Dorsolateral prefrontal cortex (tissue), 120 donors: ENCODE measurements at regions of chr22 and their contacts with region 1.

Region 1: DNA sequence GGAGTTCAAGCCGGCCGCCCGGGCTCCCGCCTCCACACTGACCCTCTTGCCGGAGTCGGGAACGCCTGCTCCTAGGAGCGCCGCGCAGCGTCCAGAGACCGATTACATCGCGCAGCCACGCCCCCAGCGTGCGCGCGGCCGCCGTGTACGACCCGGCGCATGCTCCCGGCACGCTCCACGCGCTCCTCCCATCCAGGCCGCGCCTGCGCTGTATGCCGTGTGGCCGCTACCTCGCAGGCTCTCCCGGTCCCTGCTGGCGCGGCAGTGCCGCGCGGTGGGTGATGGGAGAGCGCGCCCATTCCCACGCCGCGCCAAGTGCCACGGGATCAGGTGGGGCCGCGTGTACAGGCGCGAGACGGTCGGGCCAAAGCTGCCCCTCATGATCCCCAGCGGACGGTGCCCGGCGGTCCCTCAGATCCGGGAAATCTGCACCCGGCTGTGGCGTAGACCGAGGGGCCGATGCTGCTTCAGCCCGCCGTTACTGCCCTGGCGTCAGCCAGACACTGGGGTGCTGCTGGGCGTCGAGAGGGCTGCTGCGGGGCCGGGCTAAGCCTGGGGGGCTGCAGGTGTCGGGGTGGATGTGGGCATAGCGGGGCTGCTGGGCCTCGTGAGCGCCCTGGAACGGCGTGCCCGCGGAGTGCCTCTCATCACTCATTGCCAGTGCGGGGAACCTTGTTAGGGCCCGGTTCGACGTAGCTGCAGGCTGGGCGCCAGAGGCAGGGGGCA is at the starts of genes GNB1L and RTL10:
- DNase-seq: peak; percentile 86 to 97 (median 94)
- H3K4me3 ChIP-seq: peak within 1 kb of the TSS; percentile 70 to 100 (median 96)
- H3K27ac ChIP-seq: peak within 1 kb of the TSS; percentile 59 to 98 (median 94)
- H3K27me3 ChIP-seq: no peaks in the 10 kb centered on the region
- CTCF ChIP-seq: peak in 52 of 56 donors; percentile 9 to 71 (median 48)
- total RNA-seq, gene GNB1L: 4.8 to 17.5 (median 8.3) TPM
- total RNA-seq, gene RTL10: 15.9 to 53.5 (median 30.1) TPM

Region 2: DNA sequence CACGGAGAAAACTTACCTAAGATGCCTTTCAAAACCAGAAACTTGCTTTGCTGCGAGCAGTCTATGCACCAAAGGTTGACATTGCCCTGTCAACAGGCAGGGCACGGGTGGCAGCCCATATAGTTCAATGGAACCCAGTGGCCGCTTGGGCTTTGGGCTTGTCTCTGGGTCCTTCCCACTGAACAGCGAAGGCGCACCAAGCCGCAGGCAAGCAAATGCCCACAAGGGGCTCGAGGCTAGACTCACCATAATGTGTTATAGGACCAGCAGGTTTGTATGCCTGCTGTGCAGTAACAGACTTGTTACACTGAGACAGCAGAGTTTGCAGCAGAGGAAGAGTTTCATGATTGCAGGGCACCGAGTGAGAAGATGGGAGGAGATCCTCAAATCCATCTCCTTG is 351.1 kb before region 1 on chr22:
- intact Hi-C with region 1: no loop called
- DNase-seq: no peak
- H3K4me3 ChIP-seq: no peak overlapping the region
- H3K27ac ChIP-seq: no peak overlapping the region
- H3K27me3 ChIP-seq: no peaks in the 10 kb centered on the region
- CTCF ChIP-seq: no peak

Region 3: GRCh38 chr22:19730655-19731360 is 124.1 kb before region 1 on chr22:
- intact Hi-C with region 1: loop called in 1 of 2 experiments (anchors 5 kb)
- DNase-seq: peak; percentile 66 to 90 (median 77)
- H3K4me3 ChIP-seq: peak overlapping the region; percentile 14 to 64 (median 49)
- H3K27ac ChIP-seq: peak overlapping the region in 2 of 59 donors; percentile 4 to 52
- H3K27me3 ChIP-seq: no peaks in the 10 kb centered on the region
- CTCF ChIP-seq: peak; percentile 85 to 99 (median 96)

Region 4: GRCh38 chr22:19941365-19942082 is 86.6 kb after region 1 on chr22 and contains the starts of genes COMT and TXNRD2:
- intact Hi-C with region 1: loop called in 1 of 2 experiments (anchors 5 kb)
- DNase-seq: peak in 6 of 10 donors; percentile 49 to 76 (median 63)
- H3K4me3 ChIP-seq: peak within 1 kb of the TSS; percentile 69 to 98 (median 88)
- H3K27ac ChIP-seq: peak within 1 kb of the TSS; percentile 32 to 95 (median 86)
- H3K27me3 ChIP-seq: no peaks in the 10 kb centered on the region
- CTCF ChIP-seq: peak in 23 of 56 donors; percentile 7 to 47 (median 20)
- total RNA-seq, gene COMT: 72.4 to 193 (median 113) TPM
- total RNA-seq, gene TXNRD2: 24.8 to 48.9 (median 32.2) TPM

Region 5: GRCh38 chr22:20020533-20021195 is 165.7 kb after region 1 on chr22 and contains the start of gene TANGO2:
- intact Hi-C with region 1: loop called in 1 of 2 experiments (anchors 10 kb)
- DNase-seq: peak; percentile 84 to 98 (median 90)
- H3K4me3 ChIP-seq: peak within 1 kb of the TSS; percentile 53 to 100 (median 96)
- H3K27ac ChIP-seq: peak within 1 kb of the TSS; percentile 49 to 95 (median 90)
- H3K27me3 ChIP-seq: no peaks in the 10 kb centered on the region
- CTCF ChIP-seq: peak in 14 of 56 donors; percentile 5 to 47 (median 18)
- total RNA-seq, gene TANGO2: 45.5 to 81.1 (median 59.7) TPM

Region 6: DNA sequence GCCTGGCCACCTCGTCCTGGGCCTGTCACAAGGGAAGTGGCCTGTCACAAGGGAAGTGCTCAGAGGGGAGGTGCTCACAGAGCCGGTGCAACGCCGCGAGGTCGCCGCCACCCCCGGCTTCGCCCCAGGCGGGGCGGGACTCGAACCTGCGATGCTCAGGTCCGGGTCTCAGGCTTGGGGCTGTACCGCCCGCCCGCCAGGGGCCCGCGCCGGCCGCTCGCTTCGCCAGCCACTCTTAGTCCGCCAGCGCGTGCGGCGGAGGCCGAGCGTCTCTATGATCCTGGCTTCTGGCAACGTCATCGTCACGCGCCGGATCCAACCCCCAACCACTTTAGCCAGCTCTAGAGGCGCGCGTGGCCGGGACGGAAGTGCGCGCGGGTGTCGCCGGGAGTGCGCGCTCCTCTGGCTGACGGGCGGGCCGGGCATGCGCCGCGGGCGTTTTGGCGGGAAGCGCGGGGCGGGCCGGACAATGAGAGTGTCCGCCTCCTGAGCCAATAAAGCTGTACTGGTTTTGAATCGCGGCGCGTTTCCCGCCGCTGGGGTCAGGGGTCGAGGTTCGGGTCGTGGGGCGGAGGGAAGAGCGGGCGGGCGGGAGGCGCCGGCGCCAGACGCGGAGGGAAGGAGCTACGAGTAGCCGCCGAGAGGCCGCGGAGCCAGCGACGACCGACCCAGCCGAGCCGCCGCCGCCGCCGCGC is 262.2 kb after region 1 on chr22 and contains the start of gene TRMT2A:
- intact Hi-C with region 1: loop called in 1 of 2 experiments (anchors 5 kb)
- DNase-seq: peak; percentile 95 to 99 (median 96)
- H3K4me3 ChIP-seq: peak within 1 kb of the TSS; percentile 50 to 98 (median 87)
- H3K27ac ChIP-seq: peak within 1 kb of the TSS; percentile 20 to 96 (median 84)
- H3K27me3 ChIP-seq: no peaks in the 10 kb centered on the region
- CTCF ChIP-seq: peak in 44 of 56 donors; percentile 8 to 63 (median 36)
- total RNA-seq, gene TRMT2A: 33.1 to 73.3 (median 50.4) TPM